Caco-2 (cell line): ENCODE measurements at regions of chr20 and their contacts with region 1.

Region 1: DNA sequence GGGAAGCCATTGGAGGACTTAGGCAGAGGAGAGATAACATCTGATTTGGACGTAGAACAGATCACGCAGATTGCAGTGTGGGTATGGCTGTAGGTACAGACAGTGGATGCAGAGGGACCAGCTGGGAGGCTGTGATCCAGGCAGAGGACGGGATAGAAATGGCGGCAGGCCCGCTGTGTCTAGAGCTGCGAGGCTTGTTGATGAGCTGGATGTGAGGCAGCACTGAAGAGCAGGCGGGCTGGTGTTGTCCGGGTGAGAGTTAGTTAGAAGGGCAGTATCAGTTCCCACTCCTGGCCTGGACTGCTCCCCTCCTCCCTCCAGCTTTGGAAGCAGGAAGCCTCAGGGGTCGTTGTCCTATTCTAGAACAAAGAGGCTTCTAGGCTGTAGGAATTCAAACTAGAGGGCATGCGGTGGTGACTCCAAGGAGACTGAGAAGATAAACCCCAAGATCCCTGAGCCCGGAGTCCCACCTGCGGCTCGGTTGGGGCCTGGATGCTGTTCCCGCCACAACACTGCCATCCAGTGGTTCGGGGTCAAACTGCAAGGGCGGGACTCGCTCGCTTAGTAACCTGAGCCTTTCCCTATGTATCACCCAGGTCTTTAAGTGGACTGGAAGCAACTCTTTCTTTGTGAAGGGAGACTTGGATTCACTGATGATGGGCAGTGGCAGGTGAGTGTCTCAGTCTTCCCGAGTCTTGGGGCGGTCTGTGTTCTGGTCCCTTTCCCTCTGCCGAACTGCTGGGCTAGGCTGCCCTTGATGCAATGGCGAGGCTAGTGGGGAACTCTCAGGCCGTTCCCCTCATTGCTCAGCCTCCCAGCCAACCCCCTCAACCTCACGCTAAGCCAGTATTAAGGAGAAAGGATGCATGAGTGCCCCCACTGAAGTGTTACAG is 11.2 kb downstream of the TLDC2 start:
- DNase-seq: peak; percentile 94 to 97
- H3K4me3 ChIP-seq: no peak overlapping the region
- H3K4me3 Mint-ChIP-seq: peak overlapping the region; percentile 27
- H3K27ac Mint-ChIP-seq: no peak overlapping the region
- H3K4me1 ChIP-seq: peaks cover 9% of the 10 kb centered on the region; the same call in 1 of the 2 replicates
- H3K4me1 Mint-ChIP-seq: peaks cover 6% of the 10 kb centered on the region
- H3K27me3 ChIP-seq: no peaks in the 10 kb centered on the region
- H3K27me3 Mint-ChIP-seq: no peaks in the 10 kb centered on the region
- CTCF ChIP-seq: peak; percentile 100

Region 2: GRCh38 chr20:36550797-36551299 is 336.3 kb before region 1 on chr20:
- CTCF ChIA-PET with region 1: no interaction called
- POLR2A ChIA-PET with region 1: no interaction called
- intact Hi-C with region 1: loop called (anchors 1 kb)
- DNase-seq: no peak
- H3K4me3 ChIP-seq: no peak overlapping the region
- H3K4me3 Mint-ChIP-seq: no peak overlapping the region
- H3K27ac Mint-ChIP-seq: no peak overlapping the region
- H3K4me1 ChIP-seq: no peaks in the 10 kb centered on the region
- H3K4me1 Mint-ChIP-seq: no peaks in the 10 kb centered on the region
- H3K27me3 ChIP-seq: no peaks in the 10 kb centered on the region
- H3K27me3 Mint-ChIP-seq: peaks cover 2% of the 10 kb centered on the region
- CTCF ChIP-seq: no peak

Region 3: DNA sequence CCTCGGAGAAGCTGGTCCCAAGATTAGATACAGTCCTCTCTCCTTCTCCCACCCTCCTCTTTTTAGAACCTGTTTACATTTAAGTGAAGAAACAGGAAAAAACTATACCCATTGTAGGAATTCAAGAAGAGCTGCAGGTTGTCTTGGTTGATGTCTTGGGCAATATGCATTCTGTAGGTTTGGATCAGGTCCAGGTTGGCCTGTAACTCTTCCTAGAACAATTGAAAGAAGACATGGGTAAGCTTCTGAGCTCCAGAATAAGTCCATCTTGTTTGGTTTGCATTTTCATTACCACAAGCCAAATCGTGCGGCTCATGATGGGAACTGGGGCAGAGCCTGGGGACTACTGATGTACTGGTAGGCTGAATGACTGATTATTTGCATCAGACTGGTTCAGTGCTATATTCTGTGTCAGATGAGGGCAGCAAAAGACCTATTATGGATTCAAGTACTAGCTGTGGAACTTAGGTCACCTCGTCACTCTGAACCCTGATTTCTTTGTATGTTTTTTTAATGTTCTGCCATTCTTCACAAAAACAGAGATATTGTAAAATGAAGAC is 220.8 kb before region 1 on chr20:
- CTCF ChIA-PET with region 1: interaction called, 5 read pairs
- POLR2A ChIA-PET with region 1: no interaction called
- intact Hi-C with region 1: loop called (anchors 1 kb)
- DNase-seq: peak in 1 of 2 experiments; percentile 56
- H3K4me3 ChIP-seq: no peak overlapping the region
- H3K4me3 Mint-ChIP-seq: no peak overlapping the region
- H3K27ac Mint-ChIP-seq: no peak overlapping the region
- H3K4me1 ChIP-seq: peaks cover 7% of the 10 kb centered on the region
- H3K4me1 Mint-ChIP-seq: peaks cover 6% of the 10 kb centered on the region
- H3K27me3 ChIP-seq: no peaks in the 10 kb centered on the region
- H3K27me3 Mint-ChIP-seq: no peaks in the 10 kb centered on the region
- CTCF ChIP-seq: peak; percentile 24 to 52

Region 4: GRCh38 chr20:36835453-36836198 is 51.5 kb before region 1 on chr20:
- CTCF ChIA-PET with region 1: interaction called, 4 read pairs
- POLR2A ChIA-PET with region 1: no interaction called
- intact Hi-C with region 1: loop called (anchors 1 kb)
- DNase-seq: peak; percentile 84 to 90
- H3K4me3 ChIP-seq: no peak overlapping the region
- H3K4me3 Mint-ChIP-seq: peak overlapping the region; percentile 63
- H3K27ac Mint-ChIP-seq: peak overlapping the region; percentile 86
- H3K4me1 ChIP-seq: peaks cover 4% of the 10 kb centered on the region; the same call in 1 of the 2 replicates
- H3K4me1 Mint-ChIP-seq: peaks cover 8% of the 10 kb centered on the region
- H3K27me3 ChIP-seq: no peaks in the 10 kb centered on the region
- H3K27me3 Mint-ChIP-seq: no peaks in the 10 kb centered on the region
- CTCF ChIP-seq: no peak

Region 5: DNA sequence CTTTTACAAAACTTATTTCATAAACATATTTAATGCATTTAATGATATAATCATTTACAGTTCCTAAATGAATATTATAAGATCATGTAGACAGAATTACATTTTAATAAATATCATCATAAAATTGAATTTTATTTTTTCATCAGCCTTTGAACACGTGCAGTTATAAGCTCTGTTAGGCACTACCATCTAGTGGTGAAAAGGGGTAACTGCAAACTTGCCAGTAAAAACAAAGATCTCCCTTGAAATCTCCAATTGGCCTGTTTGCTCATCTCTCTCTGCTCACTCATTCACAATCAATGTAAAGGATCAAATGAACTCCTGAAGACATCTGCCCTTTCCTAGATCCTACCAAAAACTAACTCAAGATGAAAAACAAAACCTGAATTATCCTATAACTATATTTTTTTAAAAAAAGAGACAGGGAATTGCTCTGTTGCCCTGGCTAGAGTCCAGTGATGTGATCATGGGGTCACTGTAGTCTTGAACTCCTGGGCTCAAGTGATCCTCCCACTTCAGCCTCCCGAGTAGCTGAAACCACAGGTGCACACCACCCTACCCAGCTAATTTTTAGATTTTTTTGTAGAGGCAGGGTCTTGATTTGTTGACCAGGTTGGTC is 32.7 kb after region 1 on chr20:
- CTCF ChIA-PET with region 1: interaction called, 3 read pairs
- POLR2A ChIA-PET with region 1: no interaction called
- intact Hi-C with region 1: loop called (anchors 1 kb)
- DNase-seq: peak in 1 of 2 experiments; percentile 78
- H3K4me3 ChIP-seq: no peak overlapping the region
- H3K4me3 Mint-ChIP-seq: no peak overlapping the region
- H3K27ac Mint-ChIP-seq: no peak overlapping the region
- H3K4me1 ChIP-seq: peaks cover 10% of the 10 kb centered on the region
- H3K4me1 Mint-ChIP-seq: peaks cover 15% of the 10 kb centered on the region
- H3K27me3 ChIP-seq: no peaks in the 10 kb centered on the region
- H3K27me3 Mint-ChIP-seq: no peaks in the 10 kb centered on the region
- CTCF ChIP-seq: peak; percentile 98 to 99

Region 6: GRCh38 chr20:36951198-36951976 is 64.3 kb after region 1 on chr20 and contains the start of gene SAMHD1:
- CTCF ChIA-PET with region 1: no interaction called
- POLR2A ChIA-PET with region 1: no interaction called
- intact Hi-C with region 1: no loop called
- DNase-seq: peak; percentile 100
- H3K4me3 ChIP-seq: peak within 1 kb of the TSS; percentile 95
- H3K4me3 Mint-ChIP-seq: peak within 1 kb of the TSS; percentile 98
- H3K27ac Mint-ChIP-seq: peak within 1 kb of the TSS; percentile 96
- H3K4me1 ChIP-seq: peaks cover 3% of the 10 kb centered on the region; the same call in 1 of the 2 replicates
- H3K4me1 Mint-ChIP-seq: peaks cover 18% of the 10 kb centered on the region
- H3K27me3 ChIP-seq: no peaks in the 10 kb centered on the region
- H3K27me3 Mint-ChIP-seq: no peaks in the 10 kb centered on the region
- CTCF ChIP-seq: peak in 1 of 2 experiments; percentile 16
- total RNA-seq, gene SAMHD1: 56.8 and 63.0 TPM in 2 replicates